ENCODE measurements at regions of chr9 and their contacts with region 1.

Region 1: DNA sequence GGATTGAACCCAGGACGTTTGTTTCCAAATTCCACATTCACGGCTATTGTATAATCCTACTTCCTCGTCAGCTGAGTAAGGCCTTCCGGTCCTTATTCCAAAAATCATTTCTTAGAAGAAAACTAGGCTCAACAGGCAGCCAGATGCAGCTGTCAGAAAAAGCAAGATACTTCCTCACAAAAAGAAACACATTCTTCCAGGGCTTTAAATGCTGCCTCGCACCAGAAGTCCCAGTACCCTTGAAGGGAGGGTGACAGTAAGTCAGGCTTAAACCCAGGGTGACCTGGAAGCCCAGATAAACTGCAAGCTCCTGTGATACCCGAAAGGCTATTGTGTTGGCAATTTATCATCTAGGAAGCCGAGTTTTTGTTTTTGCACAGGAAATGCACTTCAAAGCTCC is 414.0 kb downstream of the NFIB start:
- DNase-seq: no peak
- ATAC-seq: no peak
- H3K4me3 ChIP-seq: no peak overlapping the region
- H3K27ac ChIP-seq: peak overlapping the region; percentile 67 to 78
- H3K4me1 ChIP-seq: peaks cover 0 to 6% of the 10 kb centered on the region in 2 donors
- H3K27me3 ChIP-seq: no peaks in the 10 kb centered on the region

Region 2: GRCh38 chr9:13588151-13589033 is 311.5 kb before region 1 on chr9:
- intact Hi-C with region 1: loop called in 1 of 2 experiments (anchors 10 kb)
- DNase-seq: no peak
- ATAC-seq: peak; percentile 49
- H3K4me3 ChIP-seq: no peak overlapping the region
- H3K27ac ChIP-seq: no peak overlapping the region
- H3K4me1 ChIP-seq: peaks cover 0 to 3% of the 10 kb centered on the region in 2 donors
- H3K27me3 ChIP-seq: no peaks in the 10 kb centered on the region

Region 3: GRCh38 chr9:13956107-13956506 is 56.2 kb after region 1 on chr9:
- intact Hi-C with region 1: loop called in 1 of 2 experiments (anchors 10 kb)
- DNase-seq: no peak
- ATAC-seq: no peak
- H3K4me3 ChIP-seq: no peak overlapping the region
- H3K27ac ChIP-seq: no peak overlapping the region
- H3K4me1 ChIP-seq: peaks cover 0 to 1% of the 10 kb centered on the region in 2 donors
- H3K27me3 ChIP-seq: no peaks in the 10 kb centered on the region

Region 4: GRCh38 chr9:14343261-14344031 is 443.5 kb after region 1 on chr9:
- intact Hi-C with region 1: no loop called
- DNase-seq: no peak
- ATAC-seq: no peak
- H3K4me3 ChIP-seq: no peak overlapping the region
- H3K27ac ChIP-seq: peak overlapping the region; percentile 36 to 61
- H3K4me1 ChIP-seq: peaks cover 0 to 12% of the 10 kb centered on the region in 2 donors
- H3K27me3 ChIP-seq: no peaks in the 10 kb centered on the region

Measured in aorta (tissue), 5 donors.